Heart left ventricle (tissue), 16 donors: ENCODE measurements at regions of chr19 and their contacts with region 1.

Region 1: GRCh38 chr19:4638828-4639530 is at the start of gene TNFAIP8L1:
- DNase-seq: peak; percentile 97 to 99 (median 98)
- ATAC-seq: peak; percentile 93 to 95 (median 94)
- H3K4me3 ChIP-seq: peak within 1 kb of the TSS; percentile 58 to 88 (median 81)
- H3K27ac ChIP-seq: peak within 1 kb of the TSS; percentile 7 to 92 (median 84)
- H3K4me1 ChIP-seq: peaks cover 0 to 63% (median 30%) of the 10 kb centered on the region in 12 donors
- H3K27me3 ChIP-seq: no peaks in the 10 kb centered on the region
- CTCF ChIP-seq: no peak
- POLR2A ChIP-seq: peak in 1 of 2 donors; percentile 32
- total RNA-seq, gene TNFAIP8L1: 2.8 to 15.1 (median 5.8) TPM

Region 2: DNA sequence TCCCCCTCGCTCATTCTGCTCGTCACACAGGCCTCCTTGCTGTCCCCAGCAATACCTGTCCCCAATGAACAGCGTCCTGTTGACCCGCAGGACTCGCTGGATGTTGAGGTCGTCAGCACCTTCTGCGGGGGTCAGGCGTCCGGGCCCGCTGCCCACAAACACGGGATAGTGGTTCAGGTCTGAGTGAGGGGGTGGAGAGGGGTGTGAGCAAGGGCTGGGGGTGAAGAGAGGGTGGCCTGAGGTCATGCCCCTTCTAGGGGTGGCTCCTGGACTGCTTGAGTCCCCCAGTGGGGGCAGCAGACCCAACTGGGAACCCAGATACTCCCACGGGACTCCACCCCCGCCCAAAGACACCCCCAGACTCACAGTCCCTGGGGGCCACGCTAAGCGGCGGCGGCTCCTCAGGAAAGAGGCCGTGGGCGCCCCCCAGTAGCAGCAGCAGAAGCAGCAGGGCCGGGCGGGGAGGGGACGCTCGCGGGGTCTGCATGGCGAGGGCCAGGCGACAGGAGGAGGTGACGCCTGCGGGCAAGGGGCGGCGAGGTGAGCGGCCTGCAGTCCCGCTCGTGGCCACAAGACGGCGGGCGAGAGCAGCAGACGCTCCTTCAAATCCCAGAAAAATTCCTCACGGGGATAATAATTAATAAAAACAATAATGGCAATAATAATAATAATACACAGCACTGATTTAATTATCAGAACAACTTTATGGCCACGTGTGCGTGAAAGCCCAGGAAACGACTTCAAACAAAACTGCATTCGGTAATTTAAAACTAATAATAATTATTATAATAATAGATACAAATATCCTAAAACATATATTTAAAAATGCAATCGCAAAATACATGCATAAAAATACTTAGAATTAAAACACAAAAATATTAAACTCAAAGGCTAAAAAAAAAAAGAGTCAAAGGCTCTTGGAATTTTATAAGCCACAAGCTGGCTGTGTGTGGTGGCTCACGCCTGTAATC is 80.7 kb before region 1 on chr19:
- intact Hi-C with region 1: loop called in 9 of 10 experiments (anchors 2 to 5 kb)
- DNase-seq: no peak
- ATAC-seq: no peak
- H3K4me3 ChIP-seq: peak overlapping the region in 11 of 12 donors; percentile 20 to 65 (median 58)
- H3K27ac ChIP-seq: peak overlapping the region in 8 of 12 donors; percentile 53 to 87 (median 79)
- H3K4me1 ChIP-seq: peaks cover 0 to 28% (median 3%) of the 10 kb centered on the region in 12 donors
- H3K27me3 ChIP-seq: no peaks in the 10 kb centered on the region
- CTCF ChIP-seq: peak; percentile 99 to 100 (median 99)
- POLR2A ChIP-seq: no peak

Region 3: GRCh38 chr19:4567584-4568071 is 71.4 kb before region 1 on chr19:
- intact Hi-C with region 1: loop called in 1 of 10 experiments (anchors 2 kb)
- DNase-seq: peak; percentile 70 to 87 (median 78)
- ATAC-seq: peak; percentile 43 to 92 (median 79)
- H3K4me3 ChIP-seq: peak overlapping the region in 1 of 12 donors; percentile 3
- H3K27ac ChIP-seq: peak overlapping the region in 9 of 12 donors; percentile 17 to 75 (median 55)
- H3K4me1 ChIP-seq: peaks cover 0 to 14% (median 4%) of the 10 kb centered on the region in 12 donors
- H3K27me3 ChIP-seq: no peaks in the 10 kb centered on the region
- CTCF ChIP-seq: peak; percentile 68 to 81 (median 76)
- POLR2A ChIP-seq: no peak

Region 4: DNA sequence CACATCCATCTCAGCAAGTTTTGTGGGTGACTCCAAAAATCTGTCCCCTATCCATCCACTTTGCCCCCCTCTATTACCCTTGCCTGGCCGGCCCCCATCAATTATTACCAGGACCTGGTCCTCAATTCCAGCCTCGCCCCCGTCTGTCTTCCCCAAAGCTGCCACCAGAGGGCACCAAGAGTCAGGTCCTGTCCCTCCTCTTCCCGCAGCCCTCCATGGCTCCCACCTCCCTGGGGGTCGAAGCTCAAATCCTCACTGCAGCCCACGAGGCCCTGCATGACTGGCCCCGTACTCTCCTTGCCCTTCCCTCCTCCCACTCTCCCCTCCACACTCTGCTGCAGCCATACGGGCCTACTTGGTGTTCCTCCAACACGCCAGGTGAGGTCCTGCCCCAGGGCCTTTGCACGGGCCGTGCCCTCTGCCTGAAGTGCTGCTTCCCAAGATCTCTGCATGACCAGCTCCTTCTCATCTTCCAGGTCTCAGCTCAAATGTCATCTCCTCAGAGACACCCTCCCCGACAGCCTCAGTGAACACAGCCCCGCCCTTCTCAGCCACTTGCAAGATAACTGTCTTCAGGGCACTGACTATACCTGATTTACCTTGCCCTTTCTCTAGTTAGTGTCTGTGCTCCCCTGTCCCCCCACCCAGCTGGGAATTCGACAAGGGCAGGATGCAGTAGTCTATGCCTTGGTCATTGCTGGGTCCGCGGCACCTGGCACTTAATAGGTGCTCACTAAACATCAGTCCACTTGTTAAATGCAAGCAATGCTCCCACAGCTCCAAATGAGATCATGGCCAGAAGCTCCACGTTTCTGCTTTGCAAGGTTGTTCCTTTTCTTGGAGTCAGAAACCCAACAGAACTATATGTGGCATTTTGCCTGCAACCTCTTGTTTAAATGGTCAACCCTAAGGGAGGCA is 62.7 kb before region 1 on chr19:
- intact Hi-C with region 1: loop called in 8 of 10 experiments (anchors 1 to 5 kb)
- DNase-seq: peak; percentile 59 to 86 (median 69)
- ATAC-seq: peak; percentile 21 to 55 (median 46)
- H3K4me3 ChIP-seq: no peak overlapping the region
- H3K27ac ChIP-seq: peak overlapping the region in 11 of 12 donors; percentile 60 to 90 (median 85)
- H3K4me1 ChIP-seq: peaks cover 0 to 31% (median 12%) of the 10 kb centered on the region in 12 donors
- H3K27me3 ChIP-seq: peaks cover 6 to 55% (median 21%) of the 10 kb centered on the region in 9 donors
- CTCF ChIP-seq: peak; percentile 50 to 73 (median 66)
- POLR2A ChIP-seq: no peak